Posterior cingulate gyrus (tissue), 11 donors: ENCODE measurements at regions of chr1 and their contacts with region 1.

Region 1: DNA sequence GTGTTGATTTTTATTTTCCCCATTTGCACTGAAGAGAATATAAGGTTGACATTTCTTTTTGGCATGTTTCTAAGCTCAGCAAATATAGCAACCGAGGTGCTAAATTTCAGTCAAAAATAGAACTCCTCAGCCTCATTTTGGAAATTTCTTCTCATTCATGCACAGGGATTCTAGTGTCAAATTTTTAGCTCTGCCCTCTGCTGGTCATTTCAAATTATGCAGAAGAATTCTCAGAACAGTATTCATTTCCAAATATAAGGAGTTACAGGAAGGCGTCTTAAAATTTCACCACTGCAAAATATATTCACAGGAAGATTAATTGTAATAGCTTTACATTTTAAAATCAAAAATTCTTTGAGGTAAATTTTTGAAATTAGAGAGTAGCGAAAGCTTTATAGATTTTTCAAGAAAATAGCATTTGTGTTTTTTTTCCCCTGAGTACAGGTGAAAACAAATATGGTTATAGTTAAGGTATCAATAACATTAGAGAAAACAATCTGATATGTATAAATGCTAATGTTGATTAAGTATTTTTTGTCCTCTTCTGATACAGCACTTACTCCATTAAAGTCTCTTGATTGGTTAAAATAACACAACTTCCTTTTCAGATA is 57.9 kb downstream of the FMN2 start:
- DNase-seq: no peak

Region 2: GRCh38 chr1:240092301-240093119 is 57.1 kb before region 1 on chr1:
- intact Hi-C with region 1: loop called (anchors 10 kb)
- DNase-seq: peak; percentile 34 to 94 (median 58)

Region 3: DNA sequence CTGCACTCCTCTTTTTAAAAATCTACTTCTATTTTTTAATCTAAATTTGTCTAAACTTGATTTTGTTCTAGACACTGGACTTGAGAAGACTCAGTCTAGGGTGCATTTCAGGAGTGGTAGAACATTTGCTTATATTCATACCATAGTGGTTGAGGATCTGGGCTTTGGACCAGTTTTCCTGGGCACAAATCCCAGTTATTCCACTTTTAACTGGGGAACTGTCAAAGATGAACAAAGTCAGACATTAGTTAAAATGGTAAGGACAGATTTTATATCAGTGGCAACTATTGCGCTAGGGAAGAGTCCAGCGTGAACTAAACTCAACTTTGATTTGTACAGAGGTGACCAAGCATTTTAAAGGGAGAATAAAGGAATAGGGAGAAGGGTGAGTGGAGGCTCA is 44.5 kb after region 1 on chr1:
- intact Hi-C with region 1: no loop called
- DNase-seq: no peak

Region 4: GRCh38 chr1:240465531-240465940 is 315.9 kb after region 1 on chr1:
- intact Hi-C with region 1: no loop called
- DNase-seq: no peak